ENCODE measurements at regions of chr1 and their contacts with region 1.

Region 1: DNA sequence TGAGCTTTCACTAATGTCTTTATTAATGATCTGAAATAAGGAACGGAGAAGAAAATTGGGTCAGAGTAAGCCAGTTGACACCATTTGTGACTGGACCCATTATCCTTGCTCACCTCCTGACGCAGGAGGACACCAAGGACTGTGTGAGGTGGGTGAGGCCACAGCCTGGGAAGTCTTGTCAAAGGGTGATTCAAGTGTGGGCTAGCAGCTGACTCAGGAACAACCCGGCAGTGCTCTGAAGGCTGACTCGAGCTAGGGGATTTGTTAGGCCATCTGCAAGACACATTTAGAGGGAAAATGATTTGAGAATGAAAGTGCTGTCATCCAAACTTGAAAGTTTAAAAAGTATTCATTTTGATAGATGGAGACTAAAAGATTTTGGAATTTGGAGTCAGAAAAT is 21.2 kb downstream of the PRRX1 start:
- DNase-seq: no peak
- ATAC-seq: no peak
- H3K4me3 Mint-ChIP-seq: no peak overlapping the region
- H3K27ac Mint-ChIP-seq: no peak overlapping the region
- H3K4me1 Mint-ChIP-seq: peaks cover 5% of the 10 kb centered on the region
- H3K27me3 Mint-ChIP-seq: peaks cover 26% of the 10 kb centered on the region

Region 2: DNA sequence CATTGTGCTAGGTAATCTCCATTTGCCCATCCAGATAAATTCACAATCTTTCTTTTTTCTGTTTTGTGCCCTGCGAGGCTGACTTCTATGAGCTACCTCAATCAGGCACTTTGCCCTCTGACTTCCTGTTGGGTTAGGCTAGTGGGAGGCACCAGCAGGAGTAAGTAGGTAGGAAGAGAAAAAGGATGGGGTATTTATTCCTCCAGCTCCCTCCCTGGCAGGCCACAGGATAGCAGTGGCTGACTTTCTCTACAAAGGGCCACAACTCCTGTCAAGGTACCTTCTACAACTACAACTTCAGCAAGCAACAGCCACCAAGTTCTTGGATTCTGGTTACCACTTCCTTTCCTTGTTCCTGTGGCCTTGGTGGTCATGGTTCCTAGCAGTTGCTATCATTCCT is 172.0 kb before region 1 on chr1:
- CTCF ChIA-PET with region 1: no interaction called
- POLR2A ChIA-PET with region 1: no interaction called
- intact Hi-C with region 1: no loop called
- DNase-seq: no peak
- ATAC-seq: no peak
- H3K4me3 Mint-ChIP-seq: no peak overlapping the region
- H3K27ac Mint-ChIP-seq: no peak overlapping the region
- H3K4me1 Mint-ChIP-seq: no peaks in the 10 kb centered on the region
- H3K27me3 Mint-ChIP-seq: peaks cover 14% of the 10 kb centered on the region

Region 3: GRCh38 chr1:171245458-171246064 is 560.4 kb after region 1 on chr1:
- CTCF ChIA-PET with region 1: no interaction called
- POLR2A ChIA-PET with region 1: no interaction called
- intact Hi-C with region 1: no loop called
- DNase-seq: peak; percentile 35
- ATAC-seq: no peak
- H3K4me3 Mint-ChIP-seq: no peak overlapping the region
- H3K27ac Mint-ChIP-seq: no peak overlapping the region
- H3K4me1 Mint-ChIP-seq: no peaks in the 10 kb centered on the region
- H3K27me3 Mint-ChIP-seq: peaks cover 17% of the 10 kb centered on the region

Region 4: GRCh38 chr1:172019976-172020375 is 1334.8 kb after region 1 on chr1:
- CTCF ChIA-PET with region 1: no interaction called
- POLR2A ChIA-PET with region 1: no interaction called
- intact Hi-C with region 1: loop called in 1 of 2 experiments (anchors 10 kb)
- DNase-seq: no peak
- ATAC-seq: no peak
- H3K4me3 Mint-ChIP-seq: no peak overlapping the region
- H3K27ac Mint-ChIP-seq: no peak overlapping the region
- H3K4me1 Mint-ChIP-seq: no peaks in the 10 kb centered on the region
- H3K27me3 Mint-ChIP-seq: peaks cover 8% of the 10 kb centered on the region

Measured in activated CD4-positive, alpha-beta T cell treated with anti-CD3 and anti-CD28 coated beads for 36 hours (primary cell).